ENCODE measurements at regions of chr6 and their contacts with region 1.

Region 1: GRCh38 chr6:33610779-33611421 is 10.2 kb upstream of the ITPR3 start:
- DNase-seq: no peak
- H3K4me3 ChIP-seq: no peak overlapping the region
- H3K27ac ChIP-seq: peak overlapping the region in 1 of 2 donors; percentile 54
- H3K4me1 ChIP-seq: no peaks in the 10 kb centered on the region
- H3K27me3 ChIP-seq: no peaks in the 10 kb centered on the region
- CTCF ChIP-seq: no peak
- POLR2A ChIP-seq: no peak

Region 2: GRCh38 chr6:33590531-33591198 is 20.2 kb before region 1 on chr6:
- intact Hi-C with region 1: loop called (anchors 1 kb)
- DNase-seq: no peak
- H3K4me3 ChIP-seq: no peak overlapping the region
- H3K27ac ChIP-seq: peak overlapping the region; percentile 68 to 77
- H3K4me1 ChIP-seq: no peaks in the 10 kb centered on the region
- H3K27me3 ChIP-seq: no peaks in the 10 kb centered on the region
- CTCF ChIP-seq: no peak
- POLR2A ChIP-seq: no peak

Region 3: GRCh38 chr6:33672808-33673207 is 61.9 kb after region 1 on chr6:
- intact Hi-C with region 1: no loop called
- DNase-seq: peak in 1 of 2 donors; percentile 28
- H3K4me3 ChIP-seq: no peak overlapping the region
- H3K27ac ChIP-seq: no peak overlapping the region
- H3K4me1 ChIP-seq: no peaks in the 10 kb centered on the region
- H3K27me3 ChIP-seq: no peaks in the 10 kb centered on the region
- CTCF ChIP-seq: peak in 1 of 3 donors; percentile 45
- POLR2A ChIP-seq: no peak

Region 4: GRCh38 chr6:34341481-34341971 is 730.6 kb after region 1 on chr6:
- intact Hi-C with region 1: no loop called
- DNase-seq: peak in 1 of 2 donors; percentile 26
- H3K4me3 ChIP-seq: no peak overlapping the region
- H3K27ac ChIP-seq: peak overlapping the region; percentile 65 to 66
- H3K4me1 ChIP-seq: peaks cover 3 to 24% of the 10 kb centered on the region in 2 donors
- H3K27me3 ChIP-seq: no peaks in the 10 kb centered on the region
- CTCF ChIP-seq: no peak
- POLR2A ChIP-seq: no peak

Measured in breast epithelium (tissue), 4 donors.